Activated CD4-positive, alpha-beta memory T cell treated with anti-CD3 and anti-CD28 coated beads for 36 hours (primary cell): ENCODE measurements at regions of chr14 and their contacts with region 1.

Region 1: DNA sequence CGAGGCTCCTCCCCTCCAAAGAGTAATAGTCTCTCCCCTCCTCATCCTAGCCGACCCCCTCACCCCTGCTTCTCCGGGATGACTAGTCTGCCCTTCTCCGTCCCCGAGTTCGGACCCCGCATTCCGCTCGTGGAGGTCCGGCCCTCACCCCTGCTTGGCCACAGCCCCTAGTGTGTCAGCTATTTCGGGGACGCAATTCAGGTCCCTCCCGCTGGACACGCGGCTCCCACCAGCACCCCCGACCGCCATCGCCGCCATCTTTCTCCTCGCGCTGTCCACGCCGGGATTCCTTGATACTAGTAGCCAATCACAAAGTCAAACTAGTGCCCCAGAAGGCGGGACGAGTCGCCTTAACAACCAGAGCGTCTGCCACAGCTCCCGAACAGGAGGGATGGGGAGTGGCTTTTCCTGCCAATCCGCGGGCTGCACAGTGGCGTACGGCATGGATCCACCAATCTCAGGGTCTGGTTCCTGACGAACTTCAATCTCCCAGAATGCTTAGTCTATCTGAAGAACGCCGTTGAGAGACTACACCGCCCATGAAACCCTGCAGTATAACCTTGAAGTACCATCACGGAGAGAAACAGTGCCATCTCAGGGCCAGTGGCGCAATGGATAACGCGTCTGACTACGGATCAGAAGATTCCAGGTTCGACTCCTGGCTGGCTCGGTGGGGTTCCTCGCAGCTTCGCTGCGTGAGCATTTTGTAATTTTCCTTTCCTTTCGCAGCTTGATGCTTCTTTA is at the start of gene PRMT5:
- DNase-seq: peak; percentile 98
- H3K4me3 Mint-ChIP-seq: no peak within 1 kb of the TSS
- H3K27ac Mint-ChIP-seq: no peak within 1 kb of the TSS
- H3K4me1 Mint-ChIP-seq: peaks cover 37% of the 10 kb centered on the region
- H3K27me3 Mint-ChIP-seq: no peaks in the 10 kb centered on the region
- total RNA-seq, gene PRMT5: 85.6 to 100 TPM

Region 2: GRCh38 chr14:22589096-22589839 is 340.0 kb before region 1 on chr14 and contains the start of gene DAD1:
- CTCF ChIA-PET with region 1: interaction called, 5 read pairs
- POLR2A ChIA-PET with region 1: interaction called, 5 read pairs
- intact Hi-C with region 1: loop called (anchors 1 kb)
- DNase-seq: peak; percentile 100
- H3K4me3 Mint-ChIP-seq: peak within 1 kb of the TSS; percentile 99
- H3K27ac Mint-ChIP-seq: peak within 1 kb of the TSS; percentile 100
- H3K4me1 Mint-ChIP-seq: peaks cover 64% of the 10 kb centered on the region
- H3K27me3 Mint-ChIP-seq: peaks cover 5% of the 10 kb centered on the region
- total RNA-seq, gene DAD1: 292 to 305 TPM

Region 3: GRCh38 chr14:22918804-22919600 is 10.3 kb before region 1 on chr14 and contains the start of gene RBM23:
- CTCF ChIA-PET with region 1: interaction called, 45 read pairs
- POLR2A ChIA-PET with region 1: interaction called, 47 read pairs
- intact Hi-C with region 1: loop called (anchors 1 kb)
- DNase-seq: peak; percentile 100
- H3K4me3 Mint-ChIP-seq: peak within 1 kb of the TSS; percentile 84
- H3K27ac Mint-ChIP-seq: peak within 1 kb of the TSS; percentile 99
- H3K4me1 Mint-ChIP-seq: peaks cover 35% of the 10 kb centered on the region
- H3K27me3 Mint-ChIP-seq: no peaks in the 10 kb centered on the region
- total RNA-seq, gene RBM23: 55.0 to 56.0 TPM

Region 4: DNA sequence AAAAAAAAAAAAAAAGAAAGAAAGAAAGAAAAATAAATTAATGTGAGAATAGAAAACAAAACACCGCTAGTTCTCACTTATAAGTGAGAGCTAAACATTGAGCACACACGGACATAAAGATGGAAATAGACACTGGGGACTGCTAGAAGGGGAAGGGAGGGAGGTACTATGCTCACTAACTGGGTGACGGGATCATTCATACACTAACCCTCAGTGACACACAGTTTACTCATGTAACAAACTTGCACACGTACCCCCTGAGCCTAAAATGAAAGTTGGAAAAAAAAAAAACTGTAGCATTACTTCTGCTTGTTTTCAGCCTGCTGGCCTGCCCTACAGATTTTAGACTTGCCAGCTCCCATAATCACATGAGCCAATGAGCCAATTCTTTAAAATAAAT is 10.4 kb after region 1 on chr14:
- CTCF ChIA-PET with region 1: interaction called, 15 read pairs
- POLR2A ChIA-PET with region 1: no interaction called
- intact Hi-C with region 1: no loop called
- DNase-seq: no peak
- H3K4me3 Mint-ChIP-seq: no peak overlapping the region
- H3K27ac Mint-ChIP-seq: no peak overlapping the region
- H3K4me1 Mint-ChIP-seq: no peaks in the 10 kb centered on the region
- H3K27me3 Mint-ChIP-seq: no peaks in the 10 kb centered on the region

Region 5: GRCh38 chr14:22955702-22956569 is 26.7 kb after region 1 on chr14:
- CTCF ChIA-PET with region 1: interaction called, 29 read pairs
- POLR2A ChIA-PET with region 1: interaction called, 4 read pairs
- intact Hi-C with region 1: loop called (anchors 1 kb)
- DNase-seq: no peak
- H3K4me3 Mint-ChIP-seq: peak overlapping the region; percentile 88
- H3K27ac Mint-ChIP-seq: peak overlapping the region; percentile 85
- H3K4me1 Mint-ChIP-seq: peaks cover 16% of the 10 kb centered on the region
- H3K27me3 Mint-ChIP-seq: no peaks in the 10 kb centered on the region

Region 6: DNA sequence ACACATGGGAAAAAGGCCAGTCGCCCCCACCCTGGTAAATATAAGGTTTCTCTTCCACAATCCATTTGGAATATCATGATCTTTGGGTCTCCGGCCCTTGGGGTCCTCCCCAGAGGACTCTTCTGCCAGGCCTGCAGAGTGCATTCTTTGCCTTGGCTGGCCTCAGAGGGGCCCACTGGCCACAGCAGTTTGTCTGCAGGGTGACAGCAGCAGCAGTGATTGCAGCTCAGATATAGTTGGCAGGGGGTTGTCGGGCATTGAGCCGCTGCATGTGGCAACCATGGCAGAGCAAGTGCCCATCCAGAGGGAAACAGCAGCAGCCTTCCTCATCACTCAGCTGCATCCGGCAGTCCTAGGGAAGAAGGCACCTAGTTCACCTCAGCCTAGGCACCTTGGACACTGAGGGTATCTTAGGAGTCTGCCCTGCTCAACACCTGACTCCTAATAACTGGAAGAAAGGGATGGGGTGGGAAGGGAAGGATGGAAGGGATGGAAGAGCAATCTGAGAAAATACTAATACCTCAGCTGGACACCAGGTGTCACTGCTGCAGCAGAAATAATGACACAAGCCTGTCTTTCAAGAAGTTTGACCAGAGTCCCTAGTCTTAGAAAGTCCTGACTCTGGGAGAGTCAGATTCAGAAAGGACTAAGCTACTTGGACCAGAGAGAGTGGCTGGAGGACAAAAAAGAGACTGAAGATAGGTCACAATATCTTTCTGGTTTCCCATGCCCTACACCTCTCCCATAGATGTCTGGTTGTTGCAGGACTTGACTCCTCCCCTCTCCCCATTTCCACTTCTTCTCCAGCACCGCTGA is 44.1 kb after region 1 on chr14:
- CTCF ChIA-PET with region 1: interaction called, 14 read pairs
- POLR2A ChIA-PET with region 1: no interaction called
- intact Hi-C with region 1: no loop called
- DNase-seq: peak; percentile 55
- H3K4me3 Mint-ChIP-seq: no peak overlapping the region
- H3K27ac Mint-ChIP-seq: no peak overlapping the region
- H3K4me1 Mint-ChIP-seq: no peaks in the 10 kb centered on the region
- H3K27me3 Mint-ChIP-seq: no peaks in the 10 kb centered on the region

Region 7: DNA sequence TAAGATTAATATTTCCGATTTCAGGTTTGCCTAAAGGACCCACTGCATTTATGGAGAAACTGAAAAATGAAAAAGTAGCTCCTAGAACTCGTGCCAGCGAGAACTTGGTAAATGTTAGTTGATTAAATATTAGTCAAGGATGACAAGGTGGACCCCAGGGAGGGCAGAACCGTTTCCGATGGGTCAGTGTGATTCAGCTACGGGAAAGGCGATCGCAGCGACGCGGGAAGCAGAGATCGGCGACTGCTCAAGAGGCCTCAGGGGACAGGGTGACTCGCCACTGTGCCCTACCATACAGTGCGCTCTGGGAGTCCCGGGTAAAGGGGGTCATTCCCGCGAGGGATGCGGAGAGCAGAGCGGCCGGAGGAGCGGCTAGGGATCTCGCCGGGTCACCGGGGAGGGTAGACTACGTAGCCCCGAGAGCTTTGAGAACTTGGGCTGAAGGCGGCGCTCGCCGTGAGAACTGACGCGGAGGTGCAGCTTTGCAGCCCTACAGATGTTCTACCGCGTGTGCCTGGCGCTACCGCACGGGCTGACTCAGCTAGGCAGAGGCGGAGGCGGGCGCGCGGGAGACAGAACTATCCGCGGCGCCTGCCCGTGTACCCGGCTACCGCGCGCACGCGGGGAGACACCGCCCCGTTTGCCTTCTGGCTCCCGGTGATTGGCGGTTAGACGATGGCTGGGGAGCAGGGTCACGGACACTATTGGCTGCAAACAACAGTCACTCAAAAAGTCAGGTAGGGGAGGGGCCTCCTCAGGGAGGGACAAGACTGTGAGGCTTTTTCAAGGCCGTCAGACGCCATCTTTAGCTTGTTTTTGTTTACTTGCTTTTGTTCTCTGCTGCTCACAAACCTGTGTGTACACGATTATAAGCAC is 77.5 kb after region 1 on chr14:
- CTCF ChIA-PET with region 1: interaction called, 14 read pairs
- POLR2A ChIA-PET with region 1: interaction called, 3 read pairs
- intact Hi-C with region 1: loop called (anchors 1 kb)
- DNase-seq: peak; percentile 99
- H3K4me3 Mint-ChIP-seq: peak overlapping the region; percentile 94
- H3K27ac Mint-ChIP-seq: peak overlapping the region; percentile 96
- H3K4me1 Mint-ChIP-seq: peaks cover 33% of the 10 kb centered on the region
- H3K27me3 Mint-ChIP-seq: no peaks in the 10 kb centered on the region